ENCODE measurements at regions of chr11 and their contacts with region 1.

Region 1: GRCh38 chr11:126310228-126310991 is 6.5 kb downstream of the DCPS start:
- DNase-seq: peak; percentile 83
- ATAC-seq: peak; percentile 94 to 96

Region 2: DNA sequence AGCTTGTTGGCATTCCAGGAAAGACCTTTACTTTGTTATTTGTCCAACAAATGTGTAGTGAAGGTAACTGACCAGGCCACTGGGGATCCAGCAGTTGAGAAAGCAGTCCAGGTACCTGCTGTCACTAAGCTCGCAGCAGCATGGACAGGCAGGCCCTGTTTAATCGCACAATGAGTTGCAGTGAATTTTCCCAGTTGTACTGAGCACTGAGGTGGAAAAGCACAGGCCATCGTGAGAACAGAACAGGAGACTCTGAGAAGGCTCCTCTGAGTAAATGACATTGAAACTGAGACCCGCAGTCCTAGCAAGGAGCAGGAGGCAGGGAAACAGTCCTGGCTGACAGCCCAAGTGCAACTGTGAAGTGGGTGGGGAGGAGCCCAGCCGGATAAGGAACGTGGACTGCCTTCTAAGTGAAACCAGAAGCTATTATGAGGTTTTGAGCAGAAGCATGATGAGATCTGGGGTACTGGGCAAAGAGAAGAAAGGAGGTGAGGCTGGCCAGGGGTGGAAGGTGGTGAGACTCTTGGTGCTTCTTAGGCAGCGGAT is 207.9 kb before region 1 on chr11:
- intact Hi-C with region 1: no loop called
- DNase-seq: peak; percentile 74
- ATAC-seq: peak; percentile 67 to 81

Region 3: GRCh38 chr11:126378763-126379162 is 68.4 kb after region 1 on chr11:
- intact Hi-C with region 1: no loop called
- DNase-seq: no peak
- ATAC-seq: no peak

Region 4: DNA sequence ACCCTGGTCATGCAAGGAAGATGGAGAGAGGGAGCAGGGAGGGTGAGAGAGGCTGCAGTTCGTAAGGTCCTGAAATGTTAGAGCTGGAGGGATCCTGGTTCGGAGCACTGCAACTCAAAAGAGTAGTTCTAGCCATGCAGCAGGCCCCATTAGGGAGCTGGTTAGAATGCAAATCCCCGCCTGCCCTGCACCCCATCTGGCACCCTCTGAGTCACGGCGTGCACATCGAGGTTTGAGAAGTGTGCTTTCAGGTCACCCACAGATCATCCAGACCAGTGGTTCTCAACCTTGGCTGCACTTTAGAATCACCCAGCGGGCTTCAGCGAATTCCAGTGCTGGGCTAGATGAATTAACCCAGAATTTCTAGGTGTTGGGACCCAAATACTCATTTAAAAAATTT is 93.2 kb after region 1 on chr11:
- intact Hi-C with region 1: loop called in 1 of 2 experiments (anchors 10 kb)
- DNase-seq: no peak
- ATAC-seq: peak in 1 of 2 donors; percentile 25

Region 5: GRCh38 chr11:126480410-126481302 is 170.2 kb after region 1 on chr11:
- intact Hi-C with region 1: loop called (anchors 1 to 5 kb)
- DNase-seq: peak; percentile 86
- ATAC-seq: peak; percentile 88 to 94

Measured in left cardiac atrium (tissue), 4 donors.